Transverse colon (tissue), 4 donors: ENCODE measurements at regions of chr1 and their contacts with region 1.

Region 1: GRCh38 chr1:173020138-173020750 is 30.5 kb downstream of the TNFSF18 start:
- DNase-seq: no peak
- H3K4me3 ChIP-seq: no peak overlapping the region
- H3K27ac ChIP-seq: peak overlapping the region in 2 of 4 donors; percentile 23 to 34
- H3K4me1 ChIP-seq: peaks cover 0 to 3% (median 0%) of the 10 kb centered on the region in 4 donors
- H3K27me3 ChIP-seq: no peaks in the 10 kb centered on the region
- CTCF ChIP-seq: no peak
- EP300 ChIP-seq: no peak
- POLR2A ChIP-seq: no peak

Region 2: DNA sequence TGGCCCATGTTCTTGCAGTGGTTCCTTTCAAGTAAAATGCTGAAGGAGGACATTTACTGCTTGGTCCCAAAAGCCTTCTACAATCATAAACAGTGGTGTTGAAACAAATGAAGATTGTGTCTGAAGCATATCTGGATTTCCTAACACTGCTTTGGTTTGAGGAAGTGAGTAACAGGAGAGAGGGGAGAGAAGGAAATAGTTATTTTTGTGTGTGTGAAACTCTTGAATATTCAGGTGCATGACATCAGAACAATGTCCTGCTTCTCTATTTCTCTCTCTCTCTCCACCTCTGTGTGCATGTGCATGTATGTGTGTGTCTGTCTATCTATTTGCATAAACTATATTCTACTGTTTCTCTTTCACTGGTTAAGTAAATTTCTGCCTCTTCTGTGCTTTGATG is 91.9 kb after region 1 on chr1:
- in situ Hi-C with region 1: no loop called
- intact Hi-C with region 1: loop called (anchors 10 kb)
- DNase-seq: no peak
- H3K4me3 ChIP-seq: no peak overlapping the region
- H3K27ac ChIP-seq: no peak overlapping the region
- H3K4me1 ChIP-seq: no peaks in the 10 kb centered on the region
- H3K27me3 ChIP-seq: no peaks in the 10 kb centered on the region
- CTCF ChIP-seq: no peak
- EP300 ChIP-seq: no peak
- POLR2A ChIP-seq: no peak